ENCODE measurements at regions of chr10 and their contacts with region 1.

Region 1: GRCh38 chr10:7787857-7788638 is at the starts of genes ATP5F1C and KIN:
- DNase-seq: peak; percentile 98
- H3K4me3 ChIP-seq: peak within 1 kb of the TSS; percentile 85 to 97 (median 94)
- H3K27ac ChIP-seq: peak within 1 kb of the TSS; percentile 87 to 90 (median 88)
- H3K4me1 ChIP-seq: peaks cover 50 to 76% (median 72%) of the 10 kb centered on the region in 4 donors
- H3K27me3 ChIP-seq: no peaks in the 10 kb centered on the region
- CTCF ChIP-seq: no peak
- EP300 ChIP-seq: no peak
- POLR2A ChIP-seq: peak; percentile 70
- total RNA-seq, gene ATP5F1C: 220 to 321 (median 258) TPM
- total RNA-seq, gene KIN: 3.1 to 8.3 (median 6.1) TPM

Region 2: GRCh38 chr10:7649673-7650300 is 138.3 kb before region 1 on chr10:
- intact Hi-C with region 1: no loop called
- DNase-seq: no peak
- H3K4me3 ChIP-seq: no peak overlapping the region
- H3K27ac ChIP-seq: peak overlapping the region in 2 of 4 donors; percentile 5 to 29
- H3K4me1 ChIP-seq: peaks cover 0 to 16% (median 5%) of the 10 kb centered on the region in 4 donors
- H3K27me3 ChIP-seq: no peaks in the 10 kb centered on the region
- CTCF ChIP-seq: no peak
- EP300 ChIP-seq: no peak
- POLR2A ChIP-seq: no peak

Region 3: DNA sequence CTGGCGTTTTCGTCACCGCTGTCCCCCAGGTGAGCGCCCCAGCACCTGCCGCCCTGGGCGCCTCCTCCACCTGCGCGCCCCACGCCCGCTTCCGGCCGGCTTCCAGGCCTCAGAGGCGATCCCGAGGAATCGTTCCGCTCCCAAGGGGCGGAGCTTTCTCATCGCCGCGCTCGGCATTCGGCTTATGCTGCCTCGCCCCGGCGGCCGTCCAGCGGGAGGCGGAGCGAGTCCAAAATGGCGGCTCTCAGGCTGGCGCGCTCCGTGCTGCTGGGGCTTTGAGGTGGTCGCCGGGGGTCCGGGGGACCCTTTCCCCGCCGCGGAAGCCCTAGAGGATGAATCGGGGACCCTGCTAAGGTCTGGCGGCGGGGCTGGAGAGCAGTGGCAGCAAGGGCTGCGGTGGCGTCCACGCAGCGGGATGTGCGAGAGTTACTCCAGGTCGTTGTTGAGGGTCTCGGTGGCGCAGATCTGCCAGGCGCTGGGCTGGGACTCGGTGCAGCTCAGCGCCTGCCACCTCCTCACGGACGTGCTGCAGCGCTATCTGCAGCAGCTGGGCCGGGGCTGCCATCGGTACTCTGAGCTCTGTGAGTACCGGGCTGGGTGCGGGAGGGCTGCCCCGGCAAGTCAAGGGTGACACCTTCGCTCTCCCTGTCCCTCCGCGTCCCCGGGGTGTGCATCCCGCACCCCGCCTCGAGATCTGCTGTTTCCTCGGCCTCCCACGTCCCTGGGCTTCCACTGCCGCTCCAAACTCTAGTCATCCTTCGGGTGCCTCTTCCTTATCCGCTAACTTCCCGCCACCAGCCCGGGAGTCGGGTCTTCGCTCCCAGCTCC is 30.5 kb after region 1 on chr10 and contains the start of gene TAF3:
- intact Hi-C with region 1: loop called (anchors 2 kb)
- DNase-seq: peak; percentile 94
- H3K4me3 ChIP-seq: peak within 1 kb of the TSS; percentile 80 to 100 (median 89)
- H3K27ac ChIP-seq: peak within 1 kb of the TSS; percentile 75 to 79 (median 78)
- H3K4me1 ChIP-seq: peaks cover 17 to 29% (median 18%) of the 10 kb centered on the region in 4 donors
- H3K27me3 ChIP-seq: no peaks in the 10 kb centered on the region
- CTCF ChIP-seq: no peak
- EP300 ChIP-seq: no peak
- POLR2A ChIP-seq: no peak
- total RNA-seq, gene TAF3: 8.8 to 11.2 (median 10.7) TPM

Region 4: GRCh38 chr10:8221451-8221850 is 433.4 kb after region 1 on chr10:
- intact Hi-C with region 1: no loop called
- DNase-seq: no peak
- H3K4me3 ChIP-seq: peak overlapping the region in 1 of 4 donors; percentile 3
- H3K27ac ChIP-seq: no peak overlapping the region
- H3K4me1 ChIP-seq: no peaks in the 10 kb centered on the region
- H3K27me3 ChIP-seq: no peaks in the 10 kb centered on the region
- CTCF ChIP-seq: no peak
- EP300 ChIP-seq: no peak
- POLR2A ChIP-seq: no peak